ENCODE measurements at regions of chr13 and their contacts with region 1.

Region 1: DNA sequence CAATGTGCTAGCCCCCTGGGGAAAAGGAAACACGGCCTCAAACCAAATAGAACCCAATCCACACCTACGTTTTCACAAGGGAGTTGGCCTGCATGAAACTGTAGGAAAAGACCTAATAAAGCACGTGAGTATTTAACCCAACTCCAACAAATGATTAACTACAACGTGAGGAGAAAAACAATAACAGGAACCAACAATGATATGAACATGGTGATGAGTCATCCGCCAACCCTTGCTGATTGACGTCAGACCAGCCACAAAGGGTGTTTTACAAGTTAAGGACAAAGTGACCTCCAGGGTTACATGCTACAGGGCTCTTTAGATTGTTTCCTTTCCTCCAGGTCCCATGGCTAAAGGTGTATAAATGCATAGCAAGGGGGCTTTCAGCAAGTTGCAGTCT is 460.5 kb downstream of the COG6 start:
- DNase-seq: peak in 1 of 2 donors; percentile 56
- ATAC-seq: peak; percentile 42
- H3K4me3 ChIP-seq: no peak overlapping the region
- H3K27ac ChIP-seq: peak overlapping the region in 1 of 2 donors; percentile 86
- H3K4me1 ChIP-seq: peaks cover 5 to 8% of the 10 kb centered on the region in 2 donors
- H3K27me3 ChIP-seq: no peaks in the 10 kb centered on the region

Region 2: DNA sequence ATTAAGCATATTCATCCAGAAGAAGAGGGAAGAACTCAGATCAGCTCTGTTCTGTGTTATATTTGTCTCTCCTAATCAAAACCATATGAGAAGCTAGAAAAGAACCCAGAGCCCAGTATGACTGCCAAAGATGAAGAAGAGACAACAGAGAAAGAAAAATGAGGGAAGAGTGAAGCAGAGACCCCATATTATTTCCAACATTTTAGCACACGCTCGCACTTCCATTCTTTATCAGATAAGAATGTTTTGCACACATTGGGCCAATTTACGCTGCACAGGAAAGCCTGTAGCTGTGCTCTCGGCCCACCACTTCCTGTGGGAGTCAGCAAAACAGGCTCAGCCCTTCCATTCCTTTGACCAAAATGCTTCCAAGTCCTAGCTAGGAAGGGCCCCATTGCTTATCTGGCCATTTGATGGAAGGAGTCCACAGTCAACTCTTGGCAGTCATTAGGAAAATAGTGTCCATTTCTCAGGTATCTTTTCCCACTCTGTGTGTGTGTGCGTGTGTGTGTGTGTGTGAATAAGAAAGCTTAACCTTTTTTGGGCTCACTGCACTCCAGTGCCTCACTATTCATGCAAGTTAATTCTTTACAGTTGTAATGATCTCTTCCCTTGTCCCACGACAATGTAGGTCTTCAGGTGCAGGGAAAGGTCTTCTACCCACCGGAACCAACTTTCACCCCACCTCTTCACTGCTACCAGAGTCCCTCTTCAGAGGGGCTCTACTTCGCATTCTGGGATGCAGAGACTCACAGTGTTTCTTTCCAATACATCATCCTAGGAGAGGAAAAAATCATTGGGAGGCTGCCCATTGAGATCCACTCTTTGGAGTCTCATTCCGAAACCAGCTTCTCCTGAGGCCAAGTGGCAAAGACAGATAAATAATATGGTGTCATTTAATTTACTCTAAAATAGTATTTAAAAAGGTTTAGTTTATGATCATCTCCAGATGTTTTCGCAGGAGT is 223.0 kb before region 1 on chr13:
- intact Hi-C with region 1: no loop called
- DNase-seq: peak in 1 of 2 donors; percentile 55
- ATAC-seq: peak; percentile 79
- H3K4me3 ChIP-seq: no peak overlapping the region
- H3K27ac ChIP-seq: no peak overlapping the region
- H3K4me1 ChIP-seq: peaks cover 2 to 5% of the 10 kb centered on the region in 2 donors
- H3K27me3 ChIP-seq: no peaks in the 10 kb centered on the region

Region 3: DNA sequence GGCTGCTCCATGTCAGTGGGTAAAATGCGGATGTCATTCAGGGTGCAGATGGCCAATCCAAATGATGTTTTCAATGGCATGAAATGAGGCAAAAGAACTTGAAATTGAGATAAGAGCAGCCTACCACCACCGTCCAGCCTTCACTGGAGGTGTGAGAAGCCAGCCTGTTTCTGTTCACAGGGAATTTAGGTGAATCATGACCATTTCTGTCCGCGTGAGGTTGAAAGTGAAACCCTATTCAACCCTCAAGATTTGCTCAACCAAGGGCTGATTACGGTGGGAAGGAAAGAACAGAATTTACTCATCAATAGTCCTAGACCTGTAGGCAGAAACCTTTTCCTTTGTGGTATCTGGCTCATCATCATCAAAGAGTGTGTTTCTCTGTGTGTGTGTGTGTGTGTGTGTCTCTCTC is 89.8 kb before region 1 on chr13:
- intact Hi-C with region 1: no loop called
- DNase-seq: no peak
- ATAC-seq: no peak
- H3K4me3 ChIP-seq: no peak overlapping the region
- H3K27ac ChIP-seq: no peak overlapping the region
- H3K4me1 ChIP-seq: no peaks in the 10 kb centered on the region
- H3K27me3 ChIP-seq: no peaks in the 10 kb centered on the region

Region 4: GRCh38 chr13:40236566-40237168 is 120.7 kb after region 1 on chr13:
- intact Hi-C with region 1: loop called in 1 of 2 experiments (anchors 5 kb)
- DNase-seq: peak; percentile 63 to 78
- ATAC-seq: peak; percentile 86
- H3K4me3 ChIP-seq: no peak overlapping the region
- H3K27ac ChIP-seq: peak overlapping the region; percentile 99
- H3K4me1 ChIP-seq: peaks cover 0 to 1% of the 10 kb centered on the region in 2 donors
- H3K27me3 ChIP-seq: no peaks in the 10 kb centered on the region

Measured in aorta (tissue), 5 donors.